ENCODE measurements at regions of chr19 and their contacts with region 1.

Region 1: DNA sequence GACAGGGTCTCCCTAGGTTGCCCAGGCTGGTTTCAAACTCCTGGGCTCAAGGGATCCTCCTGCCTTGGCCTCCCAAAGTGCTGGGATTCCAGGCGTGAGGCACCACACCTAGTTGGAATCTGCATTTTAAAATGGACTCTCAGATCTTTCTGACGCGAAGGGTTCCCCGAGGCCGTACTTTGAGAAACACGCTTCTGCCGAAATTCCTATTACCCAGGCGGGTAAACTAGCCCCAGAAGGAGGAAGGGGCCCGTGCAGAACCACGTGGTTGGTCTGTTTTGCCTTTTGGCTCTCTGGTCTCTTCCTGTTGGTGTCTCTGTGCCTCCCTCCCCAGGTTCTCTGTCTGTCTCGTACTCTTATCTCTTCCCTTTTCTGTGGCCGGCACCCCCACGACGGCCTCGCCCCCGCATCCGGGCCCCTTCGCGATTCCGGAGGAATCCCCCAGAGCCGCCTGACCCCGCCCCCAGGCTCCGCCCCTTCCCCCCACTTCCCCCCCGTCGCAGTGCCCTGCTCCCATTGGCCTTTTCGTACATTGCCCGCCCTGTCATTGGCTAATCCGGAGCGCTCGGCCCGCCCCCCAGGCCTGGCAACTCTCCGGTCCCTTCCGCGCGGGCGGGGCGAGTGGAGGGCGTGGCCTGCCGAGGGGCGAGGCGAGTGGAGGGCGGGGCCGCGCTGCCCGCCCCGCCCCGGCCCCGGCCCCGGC is at the start of gene TNFAIP8L1:
- DNase-seq: peak; percentile 99
- ATAC-seq: peak; percentile 96
- H3K4me3 Mint-ChIP-seq: peak within 1 kb of the TSS; percentile 98
- H3K27ac Mint-ChIP-seq: peak within 1 kb of the TSS; percentile 98
- H3K4me1 Mint-ChIP-seq: peaks cover 34% of the 10 kb centered on the region
- H3K27me3 Mint-ChIP-seq: no peaks in the 10 kb centered on the region
- CTCF ChIP-seq: no peak
- total RNA-seq, gene TNFAIP8L1: 13.5 to 13.7 TPM

Region 2: GRCh38 chr19:4556597-4557127 is 82.3 kb before region 1 on chr19:
- CTCF ChIA-PET with region 1: interaction called, 16 read pairs
- POLR2A ChIA-PET with region 1: interaction called, 3 read pairs
- intact Hi-C with region 1: no loop called
- DNase-seq: peak; percentile 40
- ATAC-seq: peak; percentile 68
- H3K4me3 Mint-ChIP-seq: no peak overlapping the region
- H3K27ac Mint-ChIP-seq: no peak overlapping the region
- H3K4me1 Mint-ChIP-seq: no peaks in the 10 kb centered on the region
- H3K27me3 Mint-ChIP-seq: peaks cover 2% of the 10 kb centered on the region
- CTCF ChIP-seq: no peak

Region 3: DNA sequence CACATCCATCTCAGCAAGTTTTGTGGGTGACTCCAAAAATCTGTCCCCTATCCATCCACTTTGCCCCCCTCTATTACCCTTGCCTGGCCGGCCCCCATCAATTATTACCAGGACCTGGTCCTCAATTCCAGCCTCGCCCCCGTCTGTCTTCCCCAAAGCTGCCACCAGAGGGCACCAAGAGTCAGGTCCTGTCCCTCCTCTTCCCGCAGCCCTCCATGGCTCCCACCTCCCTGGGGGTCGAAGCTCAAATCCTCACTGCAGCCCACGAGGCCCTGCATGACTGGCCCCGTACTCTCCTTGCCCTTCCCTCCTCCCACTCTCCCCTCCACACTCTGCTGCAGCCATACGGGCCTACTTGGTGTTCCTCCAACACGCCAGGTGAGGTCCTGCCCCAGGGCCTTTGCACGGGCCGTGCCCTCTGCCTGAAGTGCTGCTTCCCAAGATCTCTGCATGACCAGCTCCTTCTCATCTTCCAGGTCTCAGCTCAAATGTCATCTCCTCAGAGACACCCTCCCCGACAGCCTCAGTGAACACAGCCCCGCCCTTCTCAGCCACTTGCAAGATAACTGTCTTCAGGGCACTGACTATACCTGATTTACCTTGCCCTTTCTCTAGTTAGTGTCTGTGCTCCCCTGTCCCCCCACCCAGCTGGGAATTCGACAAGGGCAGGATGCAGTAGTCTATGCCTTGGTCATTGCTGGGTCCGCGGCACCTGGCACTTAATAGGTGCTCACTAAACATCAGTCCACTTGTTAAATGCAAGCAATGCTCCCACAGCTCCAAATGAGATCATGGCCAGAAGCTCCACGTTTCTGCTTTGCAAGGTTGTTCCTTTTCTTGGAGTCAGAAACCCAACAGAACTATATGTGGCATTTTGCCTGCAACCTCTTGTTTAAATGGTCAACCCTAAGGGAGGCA is 62.7 kb before region 1 on chr19:
- CTCF ChIA-PET with region 1: interaction called, 80 read pairs
- POLR2A ChIA-PET with region 1: interaction called, 3 read pairs
- intact Hi-C with region 1: loop called (anchors 5 kb)
- DNase-seq: peak; percentile 85
- ATAC-seq: peak; percentile 59
- H3K4me3 Mint-ChIP-seq: no peak overlapping the region
- H3K27ac Mint-ChIP-seq: no peak overlapping the region
- H3K4me1 Mint-ChIP-seq: peaks cover 9% of the 10 kb centered on the region
- H3K27me3 Mint-ChIP-seq: peaks cover 39% of the 10 kb centered on the region
- CTCF ChIP-seq: peak; percentile 74

Region 4: GRCh38 chr19:4589579-4590410 is 49.2 kb before region 1 on chr19:
- CTCF ChIA-PET with region 1: interaction called, 20 read pairs
- POLR2A ChIA-PET with region 1: no interaction called
- intact Hi-C with region 1: no loop called
- DNase-seq: peak; percentile 52
- ATAC-seq: peak; percentile 69
- H3K4me3 Mint-ChIP-seq: no peak overlapping the region
- H3K27ac Mint-ChIP-seq: no peak overlapping the region
- H3K4me1 Mint-ChIP-seq: no peaks in the 10 kb centered on the region
- H3K27me3 Mint-ChIP-seq: peaks cover 38% of the 10 kb centered on the region
- CTCF ChIP-seq: peak; percentile 24

Region 5: DNA sequence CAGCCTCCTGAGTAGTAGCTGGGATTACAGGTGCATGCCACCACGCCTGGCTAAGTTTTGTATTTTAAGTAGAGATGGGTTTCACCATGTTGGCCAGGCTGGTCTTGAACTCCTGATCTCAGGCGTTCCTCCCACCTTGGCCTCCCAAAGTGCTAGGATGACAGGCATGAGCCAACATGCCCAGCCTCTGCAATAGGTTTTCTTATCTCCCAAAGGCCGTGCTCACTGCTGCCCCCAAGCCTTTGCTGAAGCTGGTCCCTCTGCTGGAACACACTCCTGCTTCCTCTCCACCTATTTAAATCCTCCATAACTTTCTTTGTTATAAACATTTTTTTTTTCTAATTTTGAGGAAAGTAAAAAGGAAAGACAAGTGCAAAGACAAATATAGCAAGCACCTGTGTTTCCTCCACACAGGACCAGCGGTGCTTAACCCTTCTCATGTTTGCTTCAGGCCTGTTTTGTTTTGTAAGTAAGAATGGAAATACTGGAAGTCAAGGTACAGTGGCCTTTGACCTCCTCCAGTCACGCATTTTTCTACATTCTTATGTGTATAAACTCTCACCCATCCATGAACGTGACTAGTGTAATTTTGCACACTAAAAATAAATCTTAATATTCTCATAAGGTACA is 14.1 kb before region 1 on chr19:
- CTCF ChIA-PET with region 1: interaction called, 21 read pairs
- POLR2A ChIA-PET with region 1: no interaction called
- intact Hi-C with region 1: no loop called
- DNase-seq: no peak
- ATAC-seq: no peak
- H3K4me3 Mint-ChIP-seq: no peak overlapping the region
- H3K27ac Mint-ChIP-seq: no peak overlapping the region
- H3K4me1 Mint-ChIP-seq: no peaks in the 10 kb centered on the region
- H3K27me3 Mint-ChIP-seq: peaks cover 8% of the 10 kb centered on the region
- CTCF ChIP-seq: no peak

Region 6: DNA sequence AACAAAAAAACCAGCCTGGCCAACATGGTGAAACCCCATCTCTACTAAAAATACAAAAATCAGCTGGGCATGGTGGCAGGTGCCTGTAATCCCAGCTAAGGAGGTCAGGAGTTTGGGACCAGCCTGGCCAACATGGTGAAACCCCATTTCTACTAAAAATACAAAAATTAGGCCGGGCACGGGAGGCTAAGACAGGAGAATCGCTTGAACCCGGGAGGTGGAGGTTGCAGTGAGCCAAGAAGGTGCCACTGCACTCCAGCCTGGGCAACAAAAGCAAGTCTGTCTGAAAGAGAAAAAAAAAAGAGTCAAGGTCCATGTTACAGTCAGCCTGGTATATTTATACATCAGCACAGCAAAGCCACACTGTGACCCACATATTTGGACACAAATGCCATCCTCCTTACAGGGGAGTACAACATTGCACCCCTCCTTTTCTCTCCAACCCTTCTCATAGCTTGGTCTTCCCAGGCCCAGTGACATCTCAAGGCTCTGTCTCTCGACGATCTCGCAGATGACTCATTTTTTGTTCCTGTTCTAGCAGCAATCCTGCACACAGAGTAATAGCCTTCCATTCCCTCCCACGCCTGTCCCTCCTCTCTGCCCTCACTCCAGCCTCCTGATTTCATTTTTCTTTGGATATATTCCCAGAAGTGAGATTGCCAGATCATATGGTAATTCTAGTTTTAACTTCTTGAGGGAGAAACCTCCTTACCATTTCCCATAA is 105.6 kb after region 1 on chr19:
- CTCF ChIA-PET with region 1: no interaction called
- POLR2A ChIA-PET with region 1: no interaction called
- intact Hi-C with region 1: no loop called
- DNase-seq: no peak
- ATAC-seq: no peak
- H3K4me3 Mint-ChIP-seq: no peak overlapping the region
- H3K27ac Mint-ChIP-seq: no peak overlapping the region
- H3K4me1 Mint-ChIP-seq: no peaks in the 10 kb centered on the region
- H3K27me3 Mint-ChIP-seq: peaks cover 26% of the 10 kb centered on the region
- CTCF ChIP-seq: no peak